ENCODE measurements at regions of chr20 and their contacts with region 1.

Region 1: GRCh38 chr20:17682103-17682888 is at the start of gene RRBP1:
- DNase-seq: peak; percentile 91 to 99 (median 95)
- ATAC-seq: peak; percentile 90
- H3K4me3 ChIP-seq: peak within 1 kb of the TSS; percentile 76
- H3K4me3 Mint-ChIP-seq: peak within 1 kb of the TSS; percentile 93
- H3K27ac ChIP-seq: peak within 1 kb of the TSS; percentile 53 to 56
- H3K27ac Mint-ChIP-seq: peak within 1 kb of the TSS; percentile 74
- H3K4me1 ChIP-seq: peaks cover 20% of the 10 kb centered on the region
- H3K4me1 Mint-ChIP-seq: peaks cover 26% of the 10 kb centered on the region
- H3K27me3 ChIP-seq: peaks cover 12 to 25% of the 10 kb centered on the region in 2 experiments
- H3K27me3 Mint-ChIP-seq: peaks cover 30% of the 10 kb centered on the region
- CTCF ChIP-seq: peak; percentile 89
- total RNA-seq, gene RRBP1: 26.4 to 27.2 TPM

Region 2: DNA sequence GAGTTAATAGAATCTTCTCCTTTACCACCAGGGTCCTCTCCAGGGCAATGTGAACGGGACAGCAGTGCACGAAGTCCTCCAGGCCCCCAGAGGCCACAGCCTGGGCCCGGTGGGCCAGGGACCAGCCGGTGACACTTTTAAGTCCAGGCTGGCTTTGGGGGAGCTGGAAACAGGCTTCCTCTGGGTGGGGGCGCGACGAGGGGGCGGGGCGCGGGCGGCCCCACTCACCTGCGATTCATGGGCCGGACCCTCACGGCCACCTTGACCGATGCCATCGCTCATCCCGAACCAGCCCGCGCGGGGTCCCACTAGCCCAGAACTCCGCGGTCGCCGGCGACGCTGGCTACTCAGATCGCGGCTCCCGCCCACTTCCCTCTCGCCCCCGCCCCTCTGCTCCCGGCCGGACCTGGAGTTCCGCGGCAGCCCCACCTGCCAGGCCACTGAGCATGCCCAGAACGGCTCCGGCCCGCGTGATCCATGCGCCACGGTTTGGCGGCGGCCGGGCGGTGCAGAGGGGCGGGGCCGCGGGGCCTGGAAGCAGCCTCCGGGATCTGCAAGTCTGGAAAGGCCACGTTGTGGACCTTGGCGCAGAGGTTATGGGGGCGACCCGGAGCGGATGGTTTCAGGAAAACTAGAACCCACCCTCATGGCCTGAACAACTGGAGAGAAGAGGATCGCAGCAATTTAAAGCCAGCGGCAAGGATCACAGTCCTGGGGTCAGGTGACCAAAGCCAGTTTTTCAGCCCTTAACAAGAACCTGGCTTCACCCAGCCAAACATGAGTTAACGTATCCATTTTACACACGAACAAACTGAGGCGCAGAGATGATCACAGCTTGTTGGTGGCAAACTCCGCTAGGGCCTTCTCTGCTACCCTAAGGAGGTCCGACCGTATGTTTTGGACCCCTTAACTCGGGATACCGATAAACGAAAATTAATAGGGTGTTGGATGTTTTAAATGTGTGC is 1109.0 kb before region 1 on chr20 and contains the start of gene KIF16B:
- CTCF ChIA-PET with region 1: no interaction called
- POLR2A ChIA-PET with region 1: no interaction called
- intact Hi-C with region 1: loop called in 1 of 2 experiments (anchors 10 kb)
- DNase-seq: peak; percentile 58 to 89 (median 76)
- ATAC-seq: peak; percentile 81
- H3K4me3 ChIP-seq: peak within 1 kb of the TSS; percentile 78
- H3K4me3 Mint-ChIP-seq: peak within 1 kb of the TSS; percentile 92
- H3K27ac ChIP-seq: no peak within 1 kb of the TSS
- H3K27ac Mint-ChIP-seq: peak within 1 kb of the TSS; percentile 64
- H3K4me1 ChIP-seq: peaks cover 34% of the 10 kb centered on the region
- H3K4me1 Mint-ChIP-seq: peaks cover 49% of the 10 kb centered on the region
- H3K27me3 ChIP-seq: no peaks in the 10 kb centered on the region
- H3K27me3 Mint-ChIP-seq: no peaks in the 10 kb centered on the region
- CTCF ChIP-seq: no peak
- total RNA-seq, gene KIF16B: 10.2 to 11.5 TPM

Region 3: GRCh38 chr20:17569616-17570346 is 112.5 kb before region 1 on chr20 and contains the start of gene DSTN:
- CTCF ChIA-PET with region 1: interaction called, 14 read pairs
- POLR2A ChIA-PET with region 1: interaction called, 34 read pairs
- intact Hi-C with region 1: loop called in 1 of 2 experiments (anchors 1 kb)
- DNase-seq: peak; percentile 75 to 95 (median 82)
- ATAC-seq: peak; percentile 87
- H3K4me3 ChIP-seq: peak within 1 kb of the TSS; percentile 85
- H3K4me3 Mint-ChIP-seq: peak within 1 kb of the TSS; percentile 96
- H3K27ac ChIP-seq: peak within 1 kb of the TSS; percentile 53 to 55
- H3K27ac Mint-ChIP-seq: peak within 1 kb of the TSS; percentile 72
- H3K4me1 ChIP-seq: peaks cover 17% of the 10 kb centered on the region
- H3K4me1 Mint-ChIP-seq: peaks cover 34% of the 10 kb centered on the region
- H3K27me3 ChIP-seq: no peaks in the 10 kb centered on the region
- H3K27me3 Mint-ChIP-seq: no peaks in the 10 kb centered on the region
- CTCF ChIP-seq: no peak
- total RNA-seq, gene DSTN: 36.0 to 38.9 TPM

Region 4: GRCh38 chr20:17856024-17856564 is 173.8 kb after region 1 on chr20:
- CTCF ChIA-PET with region 1: no interaction called
- POLR2A ChIA-PET with region 1: interaction called, 27 read pairs
- intact Hi-C with region 1: loop called in 1 of 2 experiments (anchors 5 kb)
- DNase-seq: peak in 2 of 14 experiments; percentile 17 to 28
- ATAC-seq: peak; percentile 71
- H3K4me3 ChIP-seq: no peak overlapping the region
- H3K4me3 Mint-ChIP-seq: peak overlapping the region; percentile 50
- H3K27ac ChIP-seq: no peak overlapping the region
- H3K27ac Mint-ChIP-seq: peak overlapping the region; percentile 81
- H3K4me1 ChIP-seq: peaks cover 31% of the 10 kb centered on the region
- H3K4me1 Mint-ChIP-seq: peaks cover 69% of the 10 kb centered on the region
- H3K27me3 ChIP-seq: peaks cover 0 to 9% of the 10 kb centered on the region in 2 experiments
- H3K27me3 Mint-ChIP-seq: no peaks in the 10 kb centered on the region
- CTCF ChIP-seq: no peak

Region 5: DNA sequence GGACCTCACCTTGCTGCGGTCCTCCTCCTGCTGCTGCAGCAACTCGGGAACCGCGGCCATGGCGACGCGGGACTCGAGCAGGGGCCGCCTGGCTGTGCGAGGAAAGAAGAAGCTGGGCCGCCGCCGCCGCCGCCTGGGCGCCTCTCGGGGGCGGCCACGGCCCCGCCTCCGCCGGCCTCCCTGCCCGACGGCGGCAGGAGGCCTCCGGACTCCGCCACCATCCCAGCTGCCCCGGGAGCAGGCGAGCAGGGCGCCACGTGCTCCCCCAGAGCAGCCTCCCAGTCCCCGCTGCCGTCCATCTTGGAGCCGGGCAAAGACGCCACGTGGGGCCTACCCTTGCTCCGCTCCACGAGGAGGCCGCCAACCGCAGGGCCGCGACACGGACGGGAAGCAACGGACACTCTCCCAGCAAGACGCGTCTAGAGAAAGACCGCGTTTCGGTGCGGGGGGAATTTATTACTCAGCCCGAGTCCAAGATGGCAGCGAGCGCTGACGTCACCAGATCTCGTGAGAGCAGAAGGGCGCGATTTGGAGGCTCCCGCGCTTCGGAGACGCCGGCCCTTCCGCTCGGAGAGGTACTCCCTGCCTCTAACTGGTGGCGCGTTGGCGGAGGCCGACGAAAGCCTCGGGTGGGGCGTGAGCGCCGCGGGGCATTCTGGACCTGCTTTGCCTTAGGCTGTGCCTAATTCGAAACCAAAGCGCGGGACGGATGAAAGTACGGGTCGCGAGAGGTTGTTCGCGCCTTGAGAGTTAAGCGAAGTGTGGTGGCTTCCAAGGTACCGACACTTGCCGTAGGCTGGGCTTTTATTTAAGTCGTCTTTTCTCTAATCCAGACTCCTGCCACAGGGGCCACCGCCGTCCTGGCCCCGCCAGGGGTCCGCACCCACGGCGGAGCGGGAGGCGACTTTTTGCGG is 286.3 kb after region 1 on chr20 and contains the starts of genes MGME1 and SNX5:
- CTCF ChIA-PET with region 1: interaction called, 12 read pairs
- POLR2A ChIA-PET with region 1: interaction called, 61 read pairs
- intact Hi-C with region 1: loop called (anchors 1 to 2 kb)
- DNase-seq: peak; percentile 96 to 100 (median 98)
- ATAC-seq: peak; percentile 91
- H3K4me3 ChIP-seq: peak within 1 kb of the TSS; percentile 69
- H3K4me3 Mint-ChIP-seq: peak within 1 kb of the TSS; percentile 97
- H3K27ac ChIP-seq: peak within 1 kb of the TSS; percentile 92 to 99
- H3K27ac Mint-ChIP-seq: peak within 1 kb of the TSS; percentile 92
- H3K4me1 ChIP-seq: peaks cover 46% of the 10 kb centered on the region
- H3K4me1 Mint-ChIP-seq: peaks cover 82% of the 10 kb centered on the region
- H3K27me3 ChIP-seq: no peaks in the 10 kb centered on the region
- H3K27me3 Mint-ChIP-seq: no peaks in the 10 kb centered on the region
- CTCF ChIP-seq: no peak
- total RNA-seq, gene MGME1: 4.5 to 4.6 TPM
- total RNA-seq, gene SNX5: 58.3 to 60.3 TPM

Region 6: DNA sequence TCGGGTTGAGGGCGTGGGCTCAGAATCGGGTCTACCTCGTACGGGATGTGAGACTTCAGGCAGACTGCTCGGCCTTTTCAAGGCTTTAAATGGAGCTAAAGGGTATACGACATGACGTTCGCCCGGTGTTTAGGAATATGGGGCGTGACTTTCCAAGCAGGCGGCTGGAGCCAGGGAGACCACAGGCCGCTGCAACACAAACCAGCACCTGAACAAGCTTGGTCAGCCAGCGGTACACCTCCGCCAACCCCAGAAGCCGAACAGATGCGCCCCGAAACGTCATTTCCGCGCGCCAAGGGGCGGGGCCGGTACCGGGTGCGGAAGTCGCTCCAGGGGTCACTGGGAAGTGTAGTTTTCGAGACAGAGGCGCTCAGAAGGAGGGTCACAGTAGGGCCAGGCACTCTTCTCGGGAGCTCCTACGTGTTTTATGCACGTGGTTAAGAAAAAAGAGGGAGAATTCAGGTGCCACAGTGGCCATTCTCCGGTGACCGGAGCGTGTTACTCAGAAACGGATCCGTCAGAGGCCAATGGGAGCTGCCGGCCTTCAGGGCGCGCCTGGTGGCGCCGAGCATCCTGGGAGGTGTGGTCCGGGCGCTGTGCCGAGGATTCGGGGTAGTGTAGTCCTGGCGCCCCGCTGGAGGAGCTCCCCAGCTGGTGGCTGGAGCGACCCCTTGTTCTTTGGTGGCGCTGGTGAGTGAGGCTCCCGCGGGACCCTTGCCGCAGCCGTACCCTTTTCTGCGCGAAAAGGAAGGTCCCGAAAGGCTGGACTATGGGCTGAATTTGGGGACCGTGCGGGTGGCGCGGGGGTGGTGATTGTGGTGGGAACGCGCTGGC is 605.8 kb after region 1 on chr20 and contains the start of gene ZNF133:
- CTCF ChIA-PET with region 1: interaction called, 9 read pairs
- POLR2A ChIA-PET with region 1: interaction called, 11 read pairs
- intact Hi-C with region 1: loop called in 1 of 2 experiments (anchors 2 kb)
- DNase-seq: peak; percentile 90 to 99 (median 97)
- ATAC-seq: peak; percentile 91
- H3K4me3 ChIP-seq: peak within 1 kb of the TSS; percentile 90
- H3K4me3 Mint-ChIP-seq: peak within 1 kb of the TSS; percentile 96
- H3K27ac ChIP-seq: peak within 1 kb of the TSS; percentile 95 to 98
- H3K27ac Mint-ChIP-seq: peak within 1 kb of the TSS; percentile 98
- H3K4me1 ChIP-seq: peaks cover 23% of the 10 kb centered on the region
- H3K4me1 Mint-ChIP-seq: peaks cover 49% of the 10 kb centered on the region
- H3K27me3 ChIP-seq: peaks cover 8 to 17% of the 10 kb centered on the region in 2 experiments
- H3K27me3 Mint-ChIP-seq: peaks cover 23% of the 10 kb centered on the region
- CTCF ChIP-seq: no peak
- total RNA-seq, gene ZNF133: 3.3 to 4.1 TPM